HCT116 (cell line): ENCODE measurements at regions of chr7 and their contacts with region 1.

Region 1: DNA sequence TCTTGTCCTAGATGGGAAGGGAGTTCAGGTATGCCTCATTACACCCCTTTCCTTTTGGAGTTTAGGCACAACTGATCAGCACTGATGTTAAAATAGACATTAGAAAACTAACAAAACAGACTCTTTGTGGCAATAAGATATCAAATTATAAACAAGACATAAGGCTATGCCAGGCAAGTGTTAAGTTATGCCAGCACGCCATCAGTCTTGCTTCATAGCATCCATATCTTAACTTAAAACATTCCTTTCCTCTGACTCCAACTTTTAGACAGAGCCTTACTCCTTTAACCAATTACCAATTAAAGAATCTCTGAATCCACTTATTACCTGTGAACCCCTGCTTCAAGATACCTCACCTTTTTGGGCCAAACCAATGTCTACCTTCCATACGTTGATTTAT is 126.2 kb upstream of the ETV1 start:
- DNase-seq: no peak
- ATAC-seq: no peak
- H3K4me3 ChIP-seq: no peak overlapping the region
- H3K27ac ChIP-seq: no peak overlapping the region
- H3K4me1 ChIP-seq: no peaks in the 10 kb centered on the region
- H3K27me3 ChIP-seq: no peaks in the 10 kb centered on the region
- CTCF ChIP-seq: no peak
- POLR2A ChIP-seq: no peak
- RAD21 ChIP-seq: no peak

Region 2: DNA sequence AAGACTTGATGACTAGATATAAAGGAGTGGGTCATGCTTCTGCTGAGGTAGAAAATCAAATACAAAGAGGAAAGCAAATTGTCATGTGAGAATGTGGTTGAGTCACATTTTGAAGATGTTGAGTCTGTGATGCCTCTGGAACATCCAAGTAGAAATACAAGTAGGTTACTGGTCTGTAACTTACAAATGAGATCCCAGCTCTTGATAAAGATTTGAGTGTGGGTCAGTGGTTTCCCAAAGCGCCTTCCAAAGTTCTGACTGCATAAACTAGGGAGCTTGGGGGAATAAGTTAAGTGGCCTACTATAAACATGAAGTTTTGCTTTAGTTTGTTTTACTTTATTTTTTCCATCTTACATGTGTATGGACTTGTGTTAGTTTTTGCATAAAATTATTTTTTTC is 18.1 kb after region 1 on chr7:
- CTCF ChIA-PET with region 1: no interaction called
- POLR2A ChIA-PET with region 1: no interaction called
- RAD21 ChIA-PET with region 1: no interaction called
- intact Hi-C with region 1: loop called (anchors 2 kb)
- DNase-seq: no peak
- ATAC-seq: no peak
- H3K4me3 ChIP-seq: no peak overlapping the region
- H3K27ac ChIP-seq: no peak overlapping the region
- H3K4me1 ChIP-seq: no peaks in the 10 kb centered on the region
- H3K27me3 ChIP-seq: no peaks in the 10 kb centered on the region
- CTCF ChIP-seq: no peak
- POLR2A ChIP-seq: no peak
- RAD21 ChIP-seq: no peak